HepG2 (cell line): ENCODE measurements at regions of chr18 and their contacts with region 1.

Region 1: DNA sequence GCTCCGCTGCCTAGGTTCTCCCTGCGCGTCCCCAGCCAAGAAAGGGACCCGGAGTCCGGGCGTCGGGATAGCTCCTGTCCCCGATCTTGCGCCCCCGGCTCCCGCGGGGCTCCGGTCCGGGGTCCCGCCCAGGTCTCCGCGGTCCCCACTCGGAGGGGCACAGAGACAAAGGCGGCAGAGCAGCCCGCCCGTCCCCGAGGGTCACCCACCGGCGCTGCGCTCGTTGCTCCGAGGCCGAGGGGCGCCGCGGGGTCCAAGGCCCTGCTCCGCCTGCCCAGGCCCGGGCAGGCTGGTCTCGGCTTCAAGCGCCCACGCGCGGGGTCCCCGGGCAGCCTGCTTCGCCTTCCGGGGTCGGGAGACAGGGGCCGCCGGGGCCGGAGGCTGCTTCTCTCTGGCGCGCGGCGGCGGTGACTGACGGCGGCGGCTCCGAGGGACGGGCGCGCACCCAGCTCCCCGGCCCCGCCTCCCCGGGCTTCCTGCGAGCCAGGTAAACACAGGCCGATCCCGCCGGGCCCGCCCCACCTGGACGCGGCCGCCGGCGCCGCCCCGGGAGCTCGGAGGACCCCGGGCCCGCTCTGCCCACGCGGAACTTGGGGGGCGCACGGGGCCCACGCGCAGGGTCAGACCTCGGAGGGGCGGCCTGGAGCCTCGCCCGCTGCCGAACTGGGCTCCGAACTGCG is at the start of gene MBP:
- DNase-seq: no peak
- ATAC-seq: peak; percentile 82
- H3K4me3 ChIP-seq: peak within 1 kb of the TSS; percentile 66 to 82 (median 73)
- H3K27ac ChIP-seq: no peak within 1 kb of the TSS
- H3K4me1 ChIP-seq: peaks cover 36% of the 10 kb centered on the region
- H3K27me3 ChIP-seq: peaks cover 4 to 36% of the 10 kb centered on the region in 2 experiments; a peak in 4 of 5 replicates
- CTCF ChIP-seq: no peak
- EP300 ChIP-seq: no peak
- POLR2A ChIP-seq: peak in 1 of 2 experiments; percentile 66; a peak in 1 of 4 replicates
- RAD21 ChIP-seq: no peak
- total RNA-seq, gene MBP: 5.0 TPM in 2 replicates

Region 2: GRCh38 chr18:77054606-77055428 is 77.7 kb before region 1 on chr18:
- CTCF ChIA-PET with region 1: no interaction called
- POLR2A ChIA-PET with region 1: interaction called, 3 read pairs
- in situ Hi-C with region 1: no loop called
- intact Hi-C with region 1: loop called (anchors 5 kb)
- DNase-seq: peak; percentile 87
- ATAC-seq: peak; percentile 92
- H3K4me3 ChIP-seq: peak overlapping the region in 1 of 3 experiments; percentile 58; a peak in 3 of 6 replicates
- H3K27ac ChIP-seq: peak overlapping the region; percentile 72
- H3K4me1 ChIP-seq: peaks cover 43% of the 10 kb centered on the region
- H3K27me3 ChIP-seq: no peaks in the 10 kb centered on the region
- CTCF ChIP-seq: peak; percentile 93
- EP300 ChIP-seq: peak in 1 of 2 experiments; percentile 28; a peak in 1 of 4 replicates
- POLR2A ChIP-seq: no peak
- RAD21 ChIP-seq: peak; percentile 82

Region 3: DNA sequence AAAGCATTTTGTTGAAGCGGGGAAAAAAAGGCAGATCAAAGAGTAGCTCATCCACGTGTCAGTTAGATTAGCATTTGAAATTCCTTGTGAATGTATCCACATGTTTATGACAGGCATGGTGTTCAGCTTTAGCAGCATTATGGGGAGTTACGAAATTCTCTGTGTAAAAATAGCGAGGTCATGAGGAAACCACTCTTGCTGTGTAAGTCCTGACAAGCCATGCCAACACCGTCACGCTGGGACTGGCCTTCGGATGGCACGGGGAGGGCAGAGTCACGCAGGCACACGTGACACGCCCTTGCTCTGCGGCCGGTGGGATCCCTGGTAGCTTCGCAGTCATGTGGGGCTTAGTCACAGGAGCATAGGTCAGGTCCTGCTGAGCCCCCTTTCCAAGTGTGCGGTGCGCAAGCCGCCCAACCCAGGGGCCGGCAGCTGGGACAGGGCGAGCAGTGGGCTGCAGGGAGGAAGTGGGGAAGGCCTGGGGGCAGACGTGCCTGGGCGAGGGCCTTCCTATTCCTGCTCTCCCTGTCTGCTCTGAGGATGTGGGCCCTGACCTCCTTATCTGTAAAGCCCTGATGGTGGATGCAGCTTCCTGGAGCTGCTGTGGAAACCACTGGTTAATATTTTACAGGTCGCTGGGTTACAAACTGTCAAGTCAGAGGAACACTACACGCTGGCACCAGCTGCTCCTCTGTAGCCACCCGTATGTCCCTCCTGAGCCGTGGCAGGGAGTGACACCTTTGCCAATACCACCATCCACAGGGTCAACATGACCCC is 17.9 kb before region 1 on chr18:
- CTCF ChIA-PET with region 1: interaction called, 3 read pairs
- POLR2A ChIA-PET with region 1: interaction called, 19 read pairs
- in situ Hi-C with region 1: no loop called
- intact Hi-C with region 1: loop called (anchors 2 kb)
- DNase-seq: peak; percentile 93
- ATAC-seq: peak; percentile 95
- H3K4me3 ChIP-seq: peak overlapping the region; percentile 19 to 64 (median 49); a peak in 5 of 6 replicates
- H3K27ac ChIP-seq: peak overlapping the region; percentile 87
- H3K4me1 ChIP-seq: peaks cover 54% of the 10 kb centered on the region
- H3K27me3 ChIP-seq: no peaks in the 10 kb centered on the region
- CTCF ChIP-seq: peak; percentile 4; the same call in 1 of the 2 replicates
- EP300 ChIP-seq: peak in 1 of 2 experiments; percentile 37; a peak in 1 of 4 replicates
- POLR2A ChIP-seq: peak; percentile 64 to 70
- RAD21 ChIP-seq: no peak; the same call in 1 of the 2 replicates

Region 4: DNA sequence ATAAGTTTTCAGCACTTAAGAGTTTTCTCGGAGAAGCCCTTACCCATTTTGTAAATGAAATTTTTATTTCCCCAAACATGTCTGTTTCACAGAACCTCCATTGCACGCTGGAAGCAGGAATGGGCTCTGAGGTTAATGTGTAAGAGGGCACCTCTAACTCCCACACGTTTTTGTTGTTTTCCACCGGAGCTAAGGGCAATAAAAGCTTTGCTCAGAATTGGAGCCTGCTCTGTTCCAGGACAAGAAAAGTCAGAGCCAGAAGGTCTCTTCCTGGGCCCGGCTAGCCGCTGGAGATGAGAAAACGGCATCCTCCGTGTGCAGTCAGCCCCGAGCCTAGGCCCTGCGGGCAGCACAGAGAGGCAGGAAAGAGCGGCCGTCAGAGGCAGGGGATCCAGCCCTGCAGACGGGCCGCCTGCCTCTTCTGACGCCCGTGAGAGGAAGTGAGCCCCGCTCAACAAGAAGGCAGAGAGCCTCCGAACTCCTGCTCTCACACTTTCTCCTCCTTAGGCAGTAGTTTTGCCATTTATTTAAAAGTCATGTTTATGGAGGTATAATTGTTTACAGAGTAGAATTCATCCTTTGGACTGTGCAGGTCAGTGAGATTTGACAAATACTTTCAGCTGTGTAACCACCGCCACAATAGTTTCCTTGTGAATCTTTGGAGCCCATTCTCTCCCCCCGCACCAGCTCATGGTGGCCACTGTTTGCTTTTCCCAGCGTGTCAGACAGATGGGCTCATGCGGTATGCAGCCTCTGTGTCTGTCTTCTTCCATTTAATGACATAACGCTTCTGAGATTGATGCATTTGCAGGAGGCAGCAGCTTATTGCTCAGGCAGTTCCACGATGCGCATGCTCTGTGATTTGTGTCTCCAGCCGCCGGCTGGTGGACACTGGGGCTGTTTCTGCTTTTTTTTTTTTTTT is 234.5 kb after region 1 on chr18:
- CTCF ChIA-PET with region 1: no interaction called
- POLR2A ChIA-PET with region 1: no interaction called
- in situ Hi-C with region 1: no loop called
- intact Hi-C with region 1: loop called (anchors 1 kb)
- DNase-seq: peak; percentile 97
- ATAC-seq: peak; percentile 97
- H3K4me3 ChIP-seq: peak overlapping the region; percentile 28 to 62 (median 61); a peak in 5 of 6 replicates
- H3K27ac ChIP-seq: peak overlapping the region; percentile 49
- H3K4me1 ChIP-seq: peaks cover 23% of the 10 kb centered on the region
- H3K27me3 ChIP-seq: peaks cover 1 to 8% of the 10 kb centered on the region in 2 experiments; a peak in 1 of 5 replicates
- CTCF ChIP-seq: no peak
- EP300 ChIP-seq: peak in 1 of 2 experiments; percentile 61; a peak in 3 of 4 replicates
- POLR2A ChIP-seq: no peak
- RAD21 ChIP-seq: no peak